Activated B cell treated with CpG ODN at 0.5 μM for 24 hours (primary cell): ENCODE measurements at regions of chr20 and their contacts with region 1.

Region 1: DNA sequence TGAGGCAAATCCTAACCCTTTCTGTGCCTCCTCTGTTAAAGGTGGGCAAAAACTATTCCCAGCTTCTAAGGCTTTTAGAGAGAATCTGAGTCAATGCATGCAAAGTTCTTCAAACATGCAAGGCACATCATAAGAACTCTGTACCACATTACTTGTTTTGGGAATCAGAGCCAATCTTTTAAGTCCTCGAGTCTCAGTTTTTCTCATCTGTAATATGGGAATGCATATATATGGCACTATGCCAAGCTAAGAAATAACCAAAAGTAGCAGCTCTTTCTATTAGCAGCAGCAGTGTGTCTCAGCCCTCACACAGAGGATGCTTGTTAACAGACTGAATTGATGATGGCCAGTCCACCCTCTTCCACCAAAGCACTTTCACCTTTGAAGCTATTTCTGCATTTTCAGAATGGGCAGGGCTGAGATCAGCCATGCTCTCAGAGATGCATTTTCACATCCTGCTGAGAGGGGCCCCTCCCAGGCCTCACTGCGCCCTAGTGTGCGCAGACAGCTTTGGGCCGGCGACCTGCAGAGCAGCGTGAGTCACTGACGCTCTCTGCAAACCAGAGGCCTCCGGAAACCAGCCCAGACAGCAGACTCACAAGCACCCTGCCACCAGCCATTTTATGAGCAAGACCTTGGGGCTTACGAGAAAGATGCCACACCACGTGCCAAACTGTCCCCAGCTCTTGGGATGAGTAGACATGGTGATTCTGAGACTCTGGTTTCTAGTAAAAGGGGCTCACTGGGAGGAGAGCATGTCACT is 138.0 kb downstream of the NFATC2 start:
- DNase-seq: peak; percentile 69
- ATAC-seq: peak; percentile 80
- H3K4me3 Mint-ChIP-seq: peak overlapping the region; percentile 56
- H3K27ac Mint-ChIP-seq: peak overlapping the region; percentile 99
- H3K4me1 Mint-ChIP-seq: peaks cover 84% of the 10 kb centered on the region
- H3K27me3 Mint-ChIP-seq: no peaks in the 10 kb centered on the region
- CTCF ChIP-seq: no peak

Region 2: GRCh38 chr20:51335329-51335841 is 69.1 kb before region 1 on chr20:
- CTCF ChIA-PET with region 1: no interaction called
- POLR2A ChIA-PET with region 1: no interaction called
- intact Hi-C with region 1: no loop called
- DNase-seq: no peak
- ATAC-seq: no peak
- H3K4me3 Mint-ChIP-seq: no peak overlapping the region
- H3K27ac Mint-ChIP-seq: no peak overlapping the region
- H3K4me1 Mint-ChIP-seq: no peaks in the 10 kb centered on the region
- H3K27me3 Mint-ChIP-seq: no peaks in the 10 kb centered on the region
- CTCF ChIP-seq: no peak

Region 3: DNA sequence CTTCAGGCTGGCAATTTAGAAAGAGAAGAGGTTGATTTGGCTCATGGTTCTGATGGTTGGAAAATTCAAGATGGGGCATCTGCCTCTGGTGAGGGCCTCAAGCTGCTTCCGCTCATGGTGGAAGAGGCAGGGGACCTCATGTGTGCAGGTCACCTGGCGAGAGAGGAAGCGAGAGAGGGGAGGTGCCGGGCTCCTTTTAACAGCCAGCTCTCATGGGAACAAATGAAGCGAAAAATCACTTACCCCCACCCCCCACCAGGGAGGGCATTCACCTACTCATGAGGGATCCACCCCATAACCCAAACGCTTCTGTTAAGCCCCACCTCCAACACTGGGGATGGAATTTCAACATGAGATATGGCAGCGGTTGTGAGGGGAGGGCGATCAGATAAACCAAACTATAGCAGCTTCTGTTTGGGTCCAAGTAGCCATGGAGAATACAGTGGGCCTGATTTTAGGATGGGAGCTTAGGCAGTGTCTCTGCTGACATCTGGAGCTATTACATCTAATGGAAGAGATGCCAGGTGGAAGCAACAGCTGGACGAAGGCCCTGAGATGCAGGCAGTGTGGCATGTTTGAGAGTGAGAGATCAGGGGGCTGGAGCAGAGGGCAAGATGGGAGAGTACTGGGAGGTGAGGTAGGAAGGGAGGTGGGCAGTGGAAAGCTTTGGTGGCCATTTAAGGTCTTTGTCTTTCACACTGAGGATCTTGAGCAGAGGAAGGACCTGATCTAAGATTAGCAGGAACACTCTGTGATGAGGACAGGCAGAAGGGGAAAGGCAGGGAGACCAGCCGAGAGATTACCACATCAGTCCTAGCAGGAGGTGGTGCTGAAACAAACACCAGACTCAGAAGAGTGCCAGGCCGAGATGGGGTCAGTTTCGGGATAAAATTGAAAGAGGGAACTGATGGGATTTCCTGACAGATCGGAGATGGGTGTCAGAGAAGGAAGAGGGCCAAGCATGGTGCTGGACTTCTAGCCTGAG is 23.8 kb before region 1 on chr20:
- CTCF ChIA-PET with region 1: interaction called, 14 read pairs
- POLR2A ChIA-PET with region 1: interaction called, 5 read pairs
- intact Hi-C with region 1: loop called (anchors 1 kb)
- DNase-seq: no peak
- ATAC-seq: peak; percentile 91
- H3K4me3 Mint-ChIP-seq: peak overlapping the region; percentile 21
- H3K27ac Mint-ChIP-seq: peak overlapping the region; percentile 80
- H3K4me1 Mint-ChIP-seq: peaks cover 33% of the 10 kb centered on the region
- H3K27me3 Mint-ChIP-seq: no peaks in the 10 kb centered on the region
- CTCF ChIP-seq: no peak

Region 4: DNA sequence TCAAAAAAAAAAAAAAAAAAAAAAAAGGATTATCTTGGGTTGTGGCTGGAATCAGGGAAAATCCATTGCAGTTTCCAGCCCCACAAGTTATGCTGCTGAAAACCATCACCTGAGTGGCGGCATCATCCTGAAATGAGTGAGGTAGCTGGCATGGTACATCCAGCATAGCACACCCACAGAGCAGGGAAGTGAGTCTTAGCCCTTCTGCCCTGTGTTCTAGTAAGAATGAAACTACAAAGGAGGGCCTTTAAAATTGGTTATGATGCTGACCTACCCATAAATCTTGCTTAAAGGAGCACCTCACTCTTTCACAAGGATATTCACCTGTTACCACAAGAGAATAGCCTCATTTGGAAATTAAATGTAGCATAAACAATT is 18.8 kb after region 1 on chr20:
- CTCF ChIA-PET with region 1: interaction called, 6 read pairs
- POLR2A ChIA-PET with region 1: interaction called, 16 read pairs
- intact Hi-C with region 1: loop called (anchors 1 kb)
- DNase-seq: no peak
- ATAC-seq: peak; percentile 70
- H3K4me3 Mint-ChIP-seq: peak overlapping the region; percentile 4
- H3K27ac Mint-ChIP-seq: peak overlapping the region; percentile 82
- H3K4me1 Mint-ChIP-seq: peaks cover 65% of the 10 kb centered on the region
- H3K27me3 Mint-ChIP-seq: no peaks in the 10 kb centered on the region
- CTCF ChIP-seq: no peak

Region 5: GRCh38 chr20:51456511-51457509 is 52.3 kb after region 1 on chr20:
- CTCF ChIA-PET with region 1: interaction called, 4 read pairs
- POLR2A ChIA-PET with region 1: interaction called, 20 read pairs
- intact Hi-C with region 1: loop called (anchors 1 kb)
- DNase-seq: peak; percentile 36
- ATAC-seq: peak; percentile 43
- H3K4me3 Mint-ChIP-seq: peak overlapping the region; percentile 59
- H3K27ac Mint-ChIP-seq: peak overlapping the region; percentile 79
- H3K4me1 Mint-ChIP-seq: peaks cover 64% of the 10 kb centered on the region
- H3K27me3 Mint-ChIP-seq: no peaks in the 10 kb centered on the region
- CTCF ChIP-seq: no peak

Region 6: DNA sequence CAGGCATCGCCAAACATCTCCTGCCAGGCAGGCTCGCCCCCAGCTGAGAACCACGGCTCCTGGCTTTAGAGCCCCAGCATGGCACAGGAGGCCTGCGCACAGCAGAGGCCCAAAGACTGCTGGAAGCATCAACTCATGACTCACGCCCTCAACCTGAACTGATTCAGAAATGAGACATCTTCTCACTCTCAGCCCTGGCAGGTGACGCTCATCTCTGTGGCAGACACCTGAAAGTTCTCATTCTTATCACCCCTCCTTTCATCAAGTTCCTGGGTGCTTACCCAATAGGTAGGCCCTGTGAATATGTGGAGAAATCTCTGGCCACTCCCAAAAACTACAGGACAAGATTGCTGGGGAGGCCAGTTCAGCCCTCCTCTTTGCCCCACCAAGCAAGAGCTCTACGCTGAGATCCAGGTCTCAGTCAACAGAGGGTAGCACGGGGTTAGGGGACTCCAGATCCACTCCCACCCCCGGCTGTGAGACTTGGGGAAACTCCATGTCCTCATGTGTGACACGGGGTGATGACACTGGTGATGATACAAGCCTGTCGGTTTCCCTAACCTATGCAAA is 126.7 kb after region 1 on chr20:
- CTCF ChIA-PET with region 1: interaction called, 3 read pairs
- POLR2A ChIA-PET with region 1: interaction called, 4 read pairs
- intact Hi-C with region 1: loop called (anchors 2 kb)
- DNase-seq: no peak
- ATAC-seq: peak; percentile 55
- H3K4me3 Mint-ChIP-seq: peak overlapping the region; percentile 62
- H3K27ac Mint-ChIP-seq: peak overlapping the region; percentile 89
- H3K4me1 Mint-ChIP-seq: peaks cover 92% of the 10 kb centered on the region
- H3K27me3 Mint-ChIP-seq: no peaks in the 10 kb centered on the region
- CTCF ChIP-seq: no peak

Region 7: GRCh38 chr20:52191132-52191915 is 786.8 kb after region 1 on chr20 and contains the start of gene ZFP64:
- CTCF ChIA-PET with region 1: no interaction called
- POLR2A ChIA-PET with region 1: no interaction called
- intact Hi-C with region 1: loop called (anchors 5 kb)
- DNase-seq: peak; percentile 76
- ATAC-seq: peak; percentile 81
- H3K4me3 Mint-ChIP-seq: peak within 1 kb of the TSS; percentile 96
- H3K27ac Mint-ChIP-seq: peak within 1 kb of the TSS; percentile 91
- H3K4me1 Mint-ChIP-seq: peaks cover 18% of the 10 kb centered on the region
- H3K27me3 Mint-ChIP-seq: no peaks in the 10 kb centered on the region
- CTCF ChIP-seq: peak; percentile 18
- total RNA-seq, gene ZFP64: 13.7 and 14.2 TPM in 2 replicates

Region 8: DNA sequence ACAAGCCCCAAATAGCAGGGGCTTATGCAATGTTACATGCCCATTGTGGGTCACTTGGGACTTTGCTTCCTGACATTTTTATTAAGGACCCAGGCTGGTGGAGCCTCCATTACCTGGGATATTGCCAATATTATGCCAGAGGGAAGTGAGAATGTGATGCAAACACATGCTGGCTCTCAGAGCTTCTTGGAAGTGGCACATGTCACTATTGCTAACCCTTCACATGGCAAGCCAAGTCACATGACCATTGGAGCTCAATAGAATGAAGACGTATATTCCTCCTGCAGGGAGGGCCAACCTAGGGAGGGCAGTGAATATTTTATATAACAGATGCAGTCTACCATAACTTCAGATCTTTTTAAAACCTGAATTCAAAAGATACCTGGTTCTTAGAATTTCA is 927.8 kb after region 1 on chr20:
- CTCF ChIA-PET with region 1: no interaction called
- POLR2A ChIA-PET with region 1: no interaction called
- intact Hi-C with region 1: no loop called
- DNase-seq: no peak
- ATAC-seq: no peak
- H3K4me3 Mint-ChIP-seq: no peak overlapping the region
- H3K27ac Mint-ChIP-seq: no peak overlapping the region
- H3K4me1 Mint-ChIP-seq: no peaks in the 10 kb centered on the region
- H3K27me3 Mint-ChIP-seq: peaks cover 2% of the 10 kb centered on the region
- CTCF ChIP-seq: no peak